HEK293T (cell line): ENCODE measurements at regions of chr9 and their contacts with region 1.

Region 1: GRCh38 chr9:120730661-120731514 is 16.6 kb upstream of the MEGF9 start:
- DNase-seq: no peak

Region 2: GRCh38 chr9:120446671-120447070 is 284.2 kb before region 1 on chr9:
- CTCF ChIA-PET with region 1: no interaction called
- POLR2A ChIA-PET with region 1: no interaction called
- DNase-seq: no peak

Region 3: GRCh38 chr9:120714088-120714845 is 16.6 kb before region 1 on chr9 and contains the start of gene MEGF9:
- CTCF ChIA-PET with region 1: interaction called, 3 read pairs
- POLR2A ChIA-PET with region 1: interaction called, 11 read pairs
- DNase-seq: peak; percentile 96

Region 4: GRCh38 chr9:120750421-120750820 is 19.5 kb after region 1 on chr9:
- CTCF ChIA-PET with region 1: no interaction called
- POLR2A ChIA-PET with region 1: no interaction called
- DNase-seq: no peak